ENCODE measurements at regions of chr15 and their contacts with region 1.

Region 1: DNA sequence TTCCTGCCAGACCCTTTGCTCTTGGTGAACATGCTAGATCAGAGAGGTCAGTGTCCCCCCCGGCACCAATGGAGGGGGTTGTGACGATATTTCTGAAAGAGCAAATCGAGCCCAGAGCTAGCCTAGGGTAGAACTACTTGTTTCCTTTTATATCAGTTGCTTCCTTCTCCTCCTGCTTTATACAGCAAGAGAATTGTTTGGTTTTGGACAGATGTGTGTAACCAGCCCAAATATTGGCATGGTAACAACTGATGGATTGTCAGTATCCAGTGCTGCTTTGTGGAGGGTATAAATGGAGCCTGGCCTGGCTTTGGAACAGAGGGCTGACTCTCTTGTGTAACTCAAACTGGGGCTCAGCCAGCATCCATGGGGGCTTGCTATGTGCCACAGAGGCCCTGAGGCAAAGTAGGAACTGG is 27.2 kb downstream of the SNX1 start:
- H3K4me3 ChIP-seq: no peak overlapping the region
- H3K27ac ChIP-seq: no peak overlapping the region
- H3K4me1 ChIP-seq: no peaks in the 10 kb centered on the region
- CTCF ChIP-seq: no peak

Region 2: DNA sequence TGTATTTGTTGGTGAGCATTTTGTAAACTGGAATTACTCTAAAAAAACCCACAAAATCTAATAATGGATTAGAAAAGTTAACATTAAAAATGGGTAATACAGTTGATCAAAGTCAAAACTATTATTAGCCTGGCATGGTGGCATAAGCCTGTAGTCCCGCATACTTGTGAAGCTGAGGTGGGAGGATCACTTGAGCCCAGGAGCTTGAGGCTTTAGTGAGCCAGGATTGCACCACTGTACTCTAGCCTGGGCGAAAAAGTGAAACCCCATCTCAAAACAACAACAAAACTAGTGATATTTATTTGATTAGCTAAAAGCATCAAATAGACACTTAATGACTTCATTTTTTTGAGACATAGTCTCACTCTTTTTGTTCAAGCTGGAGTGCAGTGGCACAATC is 23.6 kb before region 1 on chr15:
- CTCF ChIA-PET with region 1: no interaction called
- POLR2A ChIA-PET with region 1: interaction called, 10 read pairs
- H3K4me3 ChIP-seq: no peak overlapping the region
- H3K27ac ChIP-seq: no peak overlapping the region
- H3K4me1 ChIP-seq: peaks cover 4% of the 10 kb centered on the region
- CTCF ChIP-seq: no peak